ENCODE measurements at regions of chr3 and their contacts with region 1.

Region 1: DNA sequence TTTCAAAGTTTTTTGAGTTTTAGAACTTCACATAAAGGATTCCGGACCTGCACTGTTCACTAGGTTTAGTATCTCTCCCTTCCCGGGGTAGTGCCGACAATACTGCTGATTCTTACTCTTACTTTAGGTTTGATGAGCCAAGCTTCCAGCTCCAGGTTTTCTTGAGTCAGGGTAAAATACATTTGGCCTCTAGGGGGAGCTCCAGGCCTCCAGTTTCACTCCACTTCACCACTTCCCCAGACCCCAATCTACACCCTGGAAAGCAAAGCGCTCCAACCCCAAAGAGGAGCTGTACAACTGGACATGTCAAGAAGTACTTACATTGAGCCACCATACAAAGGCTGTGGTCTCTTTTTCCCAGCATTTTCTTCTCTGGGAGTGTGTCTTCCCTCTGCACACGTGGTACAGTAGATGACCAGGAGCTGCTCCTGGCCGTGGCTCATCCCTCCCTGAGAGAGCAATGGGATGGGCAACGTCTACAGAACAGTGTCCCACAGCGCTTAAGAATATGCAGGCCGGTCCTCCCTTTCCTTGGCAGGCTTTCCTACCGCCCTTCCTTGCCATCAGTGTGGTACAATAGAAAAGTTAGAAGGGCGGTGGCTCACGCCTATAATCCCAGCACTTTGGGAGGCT is 93.9 kb upstream of the CCDC80 start:
- DNase-seq: no peak
- H3K4me3 ChIP-seq: no peak overlapping the region
- CTCF ChIP-seq: peak; percentile 57

Region 2: GRCh38 chr3:112582244-112582874 is 152.5 kb before region 1 on chr3:
- CTCF ChIA-PET with region 1: interaction called, 13 read pairs
- POLR2A ChIA-PET with region 1: no interaction called
- DNase-seq: peak; percentile 37
- H3K4me3 ChIP-seq: no peak overlapping the region
- CTCF ChIP-seq: peak; percentile 53

Region 3: GRCh38 chr3:112688819-112689218 is 46.0 kb before region 1 on chr3:
- CTCF ChIA-PET with region 1: interaction called, 14 read pairs
- POLR2A ChIA-PET with region 1: no interaction called
- DNase-seq: no peak
- H3K4me3 ChIP-seq: no peak overlapping the region
- CTCF ChIP-seq: no peak

Region 4: GRCh38 chr3:112718516-112718915 is 16.3 kb before region 1 on chr3:
- CTCF ChIA-PET with region 1: interaction called, 37 read pairs
- POLR2A ChIA-PET with region 1: no interaction called
- DNase-seq: no peak
- H3K4me3 ChIP-seq: no peak overlapping the region
- CTCF ChIP-seq: no peak

Region 5: GRCh38 chr3:112761062-112761638 is 26.3 kb after region 1 on chr3:
- CTCF ChIA-PET with region 1: interaction called, 19 read pairs
- POLR2A ChIA-PET with region 1: no interaction called
- DNase-seq: no peak
- H3K4me3 ChIP-seq: no peak overlapping the region
- CTCF ChIP-seq: no peak

Region 6: GRCh38 chr3:112794622-112795172 is 59.9 kb after region 1 on chr3:
- CTCF ChIA-PET with region 1: interaction called, 10 read pairs
- POLR2A ChIA-PET with region 1: no interaction called
- DNase-seq: no peak
- H3K4me3 ChIP-seq: no peak overlapping the region
- CTCF ChIP-seq: no peak

Region 7: DNA sequence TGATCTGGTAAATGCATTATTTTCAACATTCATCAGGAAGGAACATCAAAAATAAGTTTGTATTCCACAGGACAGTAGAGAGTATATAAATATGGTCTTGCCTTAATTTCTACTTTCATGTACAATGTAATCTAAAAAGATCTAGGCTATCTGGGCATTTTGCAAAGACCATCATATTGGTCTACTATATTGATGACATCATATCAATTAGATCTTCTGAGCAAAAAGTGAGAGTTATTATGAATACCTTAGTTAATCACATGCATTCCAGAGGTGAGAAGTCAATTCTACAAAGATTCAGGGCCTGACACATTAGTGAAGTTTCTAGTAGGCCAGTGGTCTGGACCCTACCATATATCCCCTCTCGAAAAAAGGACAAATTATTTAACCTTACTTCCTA is 97.9 kb after region 1 on chr3:
- CTCF ChIA-PET with region 1: no interaction called
- POLR2A ChIA-PET with region 1: no interaction called
- DNase-seq: no peak
- H3K4me3 ChIP-seq: no peak overlapping the region
- CTCF ChIP-seq: no peak

Region 8: DNA sequence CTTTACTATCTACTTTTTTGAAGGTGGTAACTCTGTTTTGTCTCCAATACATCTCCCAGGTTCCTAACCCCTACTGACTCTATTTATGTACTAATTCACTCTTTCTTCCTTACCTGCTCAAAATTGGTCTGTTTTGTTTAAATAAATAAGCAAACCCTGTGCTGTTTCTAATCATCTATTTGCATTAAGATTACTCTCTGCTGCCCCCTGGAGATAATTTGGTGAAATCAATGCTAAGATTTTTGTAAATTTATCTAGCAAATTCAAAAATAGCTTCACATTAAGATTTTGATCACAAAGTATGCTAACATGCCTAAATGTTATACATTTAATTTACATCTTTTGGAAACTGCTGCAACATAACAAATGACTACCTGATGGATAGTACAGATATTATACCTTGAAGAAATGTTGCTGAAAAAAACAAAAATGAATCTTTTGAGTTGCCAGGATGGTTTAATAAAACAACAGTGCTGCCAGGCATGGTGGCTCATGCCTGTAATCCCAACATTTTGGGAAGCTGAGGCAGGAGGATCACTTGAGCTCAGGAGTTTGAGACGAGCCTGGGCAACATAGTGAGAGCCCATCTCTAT is 244.5 kb after region 1 on chr3:
- CTCF ChIA-PET with region 1: interaction called, 43 read pairs
- POLR2A ChIA-PET with region 1: no interaction called
- DNase-seq: peak; percentile 5
- H3K4me3 ChIP-seq: no peak overlapping the region
- CTCF ChIP-seq: peak; percentile 30

Measured in AG04449 (cell line).